Tibial artery (tissue), 4 donors: ENCODE measurements at regions of chr6 and their contacts with region 1.

Region 1: GRCh38 chr6:33200219-33201146 is at the starts of genes RXRB and SLC39A7:
- DNase-seq: peak; percentile 100
- H3K4me3 ChIP-seq: peak within 1 kb of the TSS; percentile 80 to 95
- H3K27ac ChIP-seq: peak within 1 kb of the TSS; percentile 93 to 94
- H3K4me1 ChIP-seq: peaks cover 0 to 70% (median 56%) of the 10 kb centered on the region in 4 donors
- H3K27me3 ChIP-seq: no peaks in the 10 kb centered on the region
- CTCF ChIP-seq: peak in 1 of 2 experiments; percentile 7

Region 2: GRCh38 chr6:32894080-32895005 is 306.1 kb before region 1 on chr6:
- intact Hi-C with region 1: loop called (anchors 5 kb)
- DNase-seq: peak; percentile 91 to 95
- H3K4me3 ChIP-seq: peak overlapping the region; percentile 61 to 68
- H3K27ac ChIP-seq: peak overlapping the region; percentile 78 to 82
- H3K4me1 ChIP-seq: peaks cover 0 to 17% (median 8%) of the 10 kb centered on the region in 4 donors
- H3K27me3 ChIP-seq: no peaks in the 10 kb centered on the region
- CTCF ChIP-seq: peak in 1 of 2 experiments; percentile 7

Region 3: GRCh38 chr6:33161354-33162331 is 38.8 kb before region 1 on chr6:
- intact Hi-C with region 1: loop called (anchors 5 kb)
- DNase-seq: peak; percentile 77 to 89
- H3K4me3 ChIP-seq: peak overlapping the region; percentile 45 to 61
- H3K27ac ChIP-seq: peak overlapping the region; percentile 50 to 52
- H3K4me1 ChIP-seq: peaks cover 0 to 20% (median 14%) of the 10 kb centered on the region in 4 donors
- H3K27me3 ChIP-seq: no peaks in the 10 kb centered on the region
- CTCF ChIP-seq: peak; percentile 89 to 96

Region 4: GRCh38 chr6:33288921-33289748 is 88.7 kb after region 1 on chr6 and contains the starts of genes PFDN6 and WDR46:
- intact Hi-C with region 1: no loop called
- DNase-seq: peak; percentile 84 to 90
- H3K4me3 ChIP-seq: peak within 1 kb of the TSS; percentile 73 to 79
- H3K27ac ChIP-seq: peak within 1 kb of the TSS; percentile 69 to 81
- H3K4me1 ChIP-seq: peaks cover 4 to 25% (median 22%) of the 10 kb centered on the region in 4 donors
- H3K27me3 ChIP-seq: no peaks in the 10 kb centered on the region
- CTCF ChIP-seq: no peak